Posterior cingulate gyrus (tissue), 11 donors: ENCODE measurements at regions of chr18 and their contacts with region 1.

Region 1: GRCh38 chr18:49094979-49095632 is 144.3 kb upstream of the SMAD7 start:
- DNase-seq: no peak

Region 2: GRCh38 chr18:49041435-49042245 is 53.5 kb before region 1 on chr18:
- intact Hi-C with region 1: no loop called
- DNase-seq: no peak

Region 3: GRCh38 chr18:49061991-49062831 is 32.9 kb before region 1 on chr18:
- intact Hi-C with region 1: loop called (anchors 2 kb)
- DNase-seq: no peak

Region 4: DNA sequence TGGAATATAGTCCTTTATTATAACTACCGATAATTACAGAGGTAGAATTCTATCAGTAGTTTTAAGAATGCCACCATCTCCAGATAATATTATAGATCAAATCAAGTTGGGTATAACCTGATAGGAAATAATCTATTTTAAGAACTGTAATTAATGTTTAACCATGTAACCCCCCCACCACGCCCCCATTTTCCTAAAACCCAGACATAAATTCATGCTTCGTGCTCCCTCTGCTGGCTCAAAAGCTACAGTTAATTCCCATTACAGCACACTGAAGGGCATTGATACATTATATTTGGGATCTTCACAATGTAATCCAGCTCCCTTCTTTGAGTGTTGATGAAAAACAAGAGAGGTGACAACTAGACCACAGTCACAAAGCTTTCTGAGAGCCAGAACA is 83.6 kb after region 1 on chr18:
- intact Hi-C with region 1: loop called (anchors 5 kb)
- DNase-seq: peak in 3 of 10 donors; percentile 29 to 37 (median 37)